Activated naive CD4-positive, alpha-beta T cell treated with anti-CD3 and anti-CD28 coated beads for 36 hours (primary cell): ENCODE measurements at regions of chr6 and their contacts with region 1.

Region 1: DNA sequence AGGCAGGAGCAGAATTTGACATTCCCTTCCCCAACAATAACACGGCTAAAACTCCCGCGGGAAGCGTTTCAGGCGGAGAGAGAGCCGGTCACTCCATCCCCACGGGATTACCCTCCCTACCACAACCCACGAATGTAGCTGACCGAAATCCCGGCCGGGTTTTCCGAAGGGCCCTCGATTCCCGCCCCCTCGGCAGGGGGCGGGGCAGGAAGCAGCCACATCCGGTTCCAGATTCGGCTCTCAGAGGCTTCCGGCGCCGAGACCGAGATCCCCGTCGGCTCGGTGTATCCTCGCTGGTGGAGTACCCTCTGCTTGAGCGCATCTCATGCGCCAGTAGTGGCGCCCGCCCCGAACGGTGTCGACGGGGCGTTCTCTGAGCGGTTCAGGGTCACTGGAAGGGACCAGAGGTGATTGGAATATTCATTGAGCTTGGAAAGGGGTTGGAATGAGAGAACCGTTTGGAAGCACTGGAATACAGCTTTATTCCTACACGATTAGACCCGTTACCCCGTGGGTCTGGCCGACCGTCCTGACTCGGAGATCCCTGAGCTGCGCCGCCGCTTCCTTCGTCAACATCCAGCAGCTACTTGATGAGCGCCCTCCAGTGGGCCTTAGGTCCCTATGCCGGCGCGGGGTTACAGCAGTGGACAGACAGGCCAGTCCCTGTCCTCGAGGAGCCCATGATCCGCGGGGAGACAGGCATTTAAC is 649 bp upstream of the RGL2 start:
- DNase-seq: peak; percentile 96
- H3K4me3 Mint-ChIP-seq: peak overlapping the region; percentile 85
- H3K27ac Mint-ChIP-seq: peak overlapping the region; percentile 98
- H3K4me1 Mint-ChIP-seq: peaks cover 29% of the 10 kb centered on the region
- H3K27me3 Mint-ChIP-seq: no peaks in the 10 kb centered on the region

Region 2: GRCh38 chr6:33276864-33277662 is 22.3 kb before region 1 on chr6 and contains the start of gene B3GALT4:
- CTCF ChIA-PET with region 1: interaction called, 4 read pairs
- intact Hi-C with region 1: loop called (anchors 1 kb)
- DNase-seq: peak; percentile 73
- H3K4me3 Mint-ChIP-seq: peak within 1 kb of the TSS; percentile 99
- H3K27ac Mint-ChIP-seq: peak within 1 kb of the TSS; percentile 94
- H3K4me1 Mint-ChIP-seq: peaks cover 45% of the 10 kb centered on the region
- H3K27me3 Mint-ChIP-seq: no peaks in the 10 kb centered on the region
- total RNA-seq, gene B3GALT4: 4.4 TPM

Region 3: DNA sequence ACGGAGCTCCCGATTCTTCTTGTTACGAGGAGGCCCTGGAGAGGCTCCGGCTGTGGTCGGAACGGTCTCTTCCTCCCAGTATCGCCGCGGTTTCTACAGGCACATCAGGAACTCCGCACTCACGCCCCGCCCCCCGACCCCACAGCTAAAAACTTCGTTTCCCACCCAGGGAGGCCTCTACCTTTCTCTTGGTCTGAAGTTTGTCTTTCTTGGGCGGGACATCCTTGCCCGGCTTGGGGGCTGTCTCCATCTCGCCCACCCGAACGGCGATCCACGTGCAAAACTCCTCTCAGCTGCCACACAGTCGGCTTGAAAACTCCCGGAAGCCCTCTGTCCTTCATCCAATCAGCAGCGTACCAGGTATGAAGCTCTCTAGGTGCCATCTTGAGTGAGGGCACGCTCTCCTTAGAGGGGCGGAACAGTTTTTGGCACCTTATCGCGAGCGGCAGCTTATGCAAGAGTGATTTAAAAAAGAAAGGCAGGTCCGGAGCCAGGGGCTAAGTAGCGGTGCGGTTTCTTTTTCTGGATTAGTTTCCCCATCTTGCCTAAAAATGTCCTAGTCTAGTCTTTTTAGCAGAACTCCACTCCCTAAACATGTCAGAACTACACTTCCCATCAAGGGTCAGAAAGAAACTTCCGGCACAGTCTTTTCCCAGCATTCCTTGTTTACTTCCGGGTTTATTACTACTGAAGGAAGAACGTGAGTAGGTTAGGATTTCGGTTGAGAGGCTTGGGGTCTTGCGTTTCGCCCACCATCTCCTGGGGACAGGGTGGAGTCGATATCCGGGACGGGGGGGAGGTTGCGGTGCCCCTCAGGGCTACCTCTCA is 10.3 kb before region 1 on chr6 and contains the starts of genes PFDN6 and WDR46:
- CTCF ChIA-PET with region 1: interaction called, 4 read pairs
- intact Hi-C with region 1: loop called (anchors 1 kb)
- DNase-seq: peak; percentile 85
- H3K4me3 Mint-ChIP-seq: peak within 1 kb of the TSS; percentile 99
- H3K27ac Mint-ChIP-seq: peak within 1 kb of the TSS; percentile 91
- H3K4me1 Mint-ChIP-seq: peaks cover 43% of the 10 kb centered on the region
- H3K27me3 Mint-ChIP-seq: no peaks in the 10 kb centered on the region
- total RNA-seq, gene PFDN6: 67.9 to 81.3 TPM
- total RNA-seq, gene WDR46: 42.5 to 42.9 TPM

Region 4: GRCh38 chr6:33317669-33318425 is 18.5 kb after region 1 on chr6 and contains the start of gene ZBTB22:
- CTCF ChIA-PET with region 1: interaction called, 3 read pairs
- intact Hi-C with region 1: loop called (anchors 1 kb)
- DNase-seq: peak; percentile 97
- H3K4me3 Mint-ChIP-seq: peak within 1 kb of the TSS; percentile 94
- H3K27ac Mint-ChIP-seq: peak within 1 kb of the TSS; percentile 95
- H3K4me1 Mint-ChIP-seq: peaks cover 72% of the 10 kb centered on the region
- H3K27me3 Mint-ChIP-seq: no peaks in the 10 kb centered on the region
- total RNA-seq, gene ZBTB22: 8.8 to 9.0 TPM

Region 5: DNA sequence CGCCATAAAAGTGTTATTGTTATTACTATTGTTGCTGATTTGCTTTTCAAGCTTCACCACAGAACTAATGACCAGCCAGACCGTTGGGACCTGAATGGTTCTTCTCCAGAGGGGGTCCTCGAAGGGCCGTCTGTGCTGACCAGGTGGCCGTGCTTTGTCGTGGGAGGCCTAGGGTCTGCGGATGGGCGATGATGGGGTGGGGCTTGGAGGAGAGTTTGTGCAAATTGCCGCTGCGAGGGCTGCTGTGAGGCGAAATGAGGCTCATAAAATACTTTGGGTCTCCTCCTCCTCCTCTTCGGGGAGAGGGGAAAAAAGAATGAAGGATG is 24.2 kb after region 1 on chr6:
- CTCF ChIA-PET with region 1: interaction called, 4 read pairs
- intact Hi-C with region 1: loop called (anchors 1 kb)
- DNase-seq: no peak
- H3K4me3 Mint-ChIP-seq: peak overlapping the region; percentile 95
- H3K27ac Mint-ChIP-seq: peak overlapping the region; percentile 98
- H3K4me1 Mint-ChIP-seq: peaks cover 43% of the 10 kb centered on the region
- H3K27me3 Mint-ChIP-seq: no peaks in the 10 kb centered on the region

Region 6: GRCh38 chr6:33344701-33345697 is 45.6 kb after region 1 on chr6:
- CTCF ChIA-PET with region 1: interaction called, 13 read pairs
- intact Hi-C with region 1: loop called (anchors 2 kb)
- DNase-seq: peak; percentile 77
- H3K4me3 Mint-ChIP-seq: peak overlapping the region; percentile 64
- H3K27ac Mint-ChIP-seq: peak overlapping the region; percentile 74
- H3K4me1 Mint-ChIP-seq: peaks cover 20% of the 10 kb centered on the region
- H3K27me3 Mint-ChIP-seq: no peaks in the 10 kb centered on the region

Region 7: GRCh38 chr6:33375143-33375671 is 75.8 kb after region 1 on chr6:
- CTCF ChIA-PET with region 1: no interaction called
- intact Hi-C with region 1: no loop called
- DNase-seq: no peak
- H3K4me3 Mint-ChIP-seq: no peak overlapping the region
- H3K27ac Mint-ChIP-seq: no peak overlapping the region
- H3K4me1 Mint-ChIP-seq: peaks cover 2% of the 10 kb centered on the region
- H3K27me3 Mint-ChIP-seq: no peaks in the 10 kb centered on the region

Region 8: GRCh38 chr6:33410050-33410710 is 110.8 kb after region 1 on chr6:
- CTCF ChIA-PET with region 1: no interaction called
- intact Hi-C with region 1: loop called (anchors 2 kb)
- DNase-seq: peak; percentile 98
- H3K4me3 Mint-ChIP-seq: peak overlapping the region; percentile 87
- H3K27ac Mint-ChIP-seq: peak overlapping the region; percentile 93
- H3K4me1 Mint-ChIP-seq: peaks cover 39% of the 10 kb centered on the region
- H3K27me3 Mint-ChIP-seq: no peaks in the 10 kb centered on the region

Region 9: DNA sequence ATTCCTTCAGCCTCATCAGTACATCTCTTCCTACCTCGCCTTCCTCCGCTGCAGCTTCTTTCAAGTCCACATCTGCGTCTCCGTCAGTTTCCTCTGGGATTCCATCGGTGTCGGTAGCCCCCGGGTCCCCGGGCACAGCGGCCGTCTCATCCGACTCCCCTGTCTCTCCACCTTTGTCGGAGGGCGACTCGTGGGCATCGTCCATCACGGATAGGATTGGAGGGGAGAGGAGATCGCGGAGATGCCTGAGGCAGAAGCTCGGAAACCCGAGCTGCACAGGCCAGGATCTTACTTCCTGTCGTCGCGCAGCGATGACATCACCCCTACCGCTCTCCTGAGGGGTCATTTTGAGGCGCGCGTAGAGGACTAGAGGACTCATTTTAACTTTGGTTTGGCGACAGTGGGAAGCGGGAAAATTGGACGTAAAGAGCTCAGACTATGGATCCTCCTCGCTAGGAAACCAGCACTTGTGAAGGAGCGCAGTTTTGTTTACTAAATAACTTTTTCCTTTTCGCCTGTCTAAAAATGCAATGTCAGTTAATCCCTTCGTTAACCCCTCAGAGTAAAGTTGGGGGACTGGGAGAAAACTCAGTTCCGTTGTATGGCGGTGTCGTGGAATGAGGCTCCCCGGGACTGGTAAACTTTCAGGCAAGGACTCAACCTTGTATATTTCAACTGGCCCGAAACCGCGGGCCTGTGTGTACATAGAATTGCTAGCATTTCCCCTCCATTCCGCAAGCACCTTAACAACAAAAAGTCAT is 1588.5 kb after region 1 on chr6 and contains the start of gene TAF11:
- CTCF ChIA-PET with region 1: no interaction called
- intact Hi-C with region 1: no loop called
- DNase-seq: peak; percentile 97
- H3K4me3 Mint-ChIP-seq: peak within 1 kb of the TSS; percentile 99
- H3K27ac Mint-ChIP-seq: peak within 1 kb of the TSS; percentile 96
- H3K4me1 Mint-ChIP-seq: peaks cover 52% of the 10 kb centered on the region
- H3K27me3 Mint-ChIP-seq: no peaks in the 10 kb centered on the region
- total RNA-seq, gene TAF11: 27.3 to 28.5 TPM